K562 (cell line): ENCODE measurements at regions of chr4 and their contacts with region 1.

Region 1: GRCh38 chr4:140497747-140498636 is at the start of gene MGAT4D:
- DNase-seq: no peak
- ATAC-seq: peak; percentile 49; the same call in 2 of the 3 replicates
- H3K4me3 ChIP-seq: no peak within 1 kb of the TSS
- H3K27ac ChIP-seq: no peak within 1 kb of the TSS
- H3K4me1 ChIP-seq: peaks cover 0 to 8% of the 10 kb centered on the region in 2 experiments; a peak in 1 of 5 replicates
- H3K27me3 ChIP-seq: peaks cover 20 to 32% of the 10 kb centered on the region in 2 experiments; a peak in 4 of 5 replicates
- CTCF ChIP-seq: no peak
- EP300 ChIP-seq: no peak
- POLR2A ChIP-seq: no peak
- RAD21 ChIP-seq: no peak
- polyA plus RNA-seq, gene MGAT4D: not detected

Region 2: DNA sequence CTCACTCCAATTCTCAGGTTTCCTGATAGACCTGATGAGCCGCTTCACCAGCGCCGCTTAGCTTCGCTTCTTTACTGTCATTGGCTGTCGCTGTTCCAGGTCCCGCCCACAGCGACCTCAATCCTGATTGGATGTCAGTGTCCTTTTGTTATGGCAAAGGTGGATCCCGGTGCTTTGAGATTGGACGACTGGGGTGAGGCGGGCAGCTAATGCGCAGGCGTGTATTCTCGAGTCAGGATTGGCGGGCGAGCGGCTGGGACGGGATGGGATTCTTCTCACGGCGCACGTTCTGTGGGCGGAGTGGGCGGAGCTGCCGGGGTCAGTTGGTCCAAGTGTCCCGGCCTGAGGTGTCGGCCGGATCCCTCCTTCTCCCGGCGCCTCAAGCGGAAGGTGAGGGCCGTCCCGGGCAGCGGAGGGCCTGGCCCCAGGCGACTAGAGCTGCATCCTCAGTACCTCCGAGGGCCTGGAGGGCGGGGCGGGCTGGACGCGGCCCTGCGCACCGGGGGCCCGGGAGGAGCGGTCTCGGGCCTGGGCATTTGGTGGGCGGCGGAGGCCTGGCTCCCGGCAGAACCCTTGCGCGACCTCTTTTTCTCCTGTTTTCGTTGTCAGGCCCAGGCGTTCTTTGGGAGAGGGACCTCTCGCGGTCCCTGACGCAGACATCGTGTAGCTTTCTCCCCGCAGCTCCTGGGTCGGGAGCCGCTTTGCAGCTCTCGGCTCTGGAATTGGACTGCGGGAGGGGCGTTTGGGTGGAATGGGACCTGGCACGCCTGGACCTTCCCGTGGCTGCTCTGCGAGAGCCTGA is 124.5 kb before region 1 on chr4 and contains the start of gene SCOC:
- CTCF ChIA-PET with region 1: no interaction called
- POLR2A ChIA-PET with region 1: no interaction called
- in situ Hi-C with region 1: no loop called
- intact Hi-C with region 1: loop called (anchors 5 kb)
- DNase-seq: peak; percentile 98 to 99 (median 99)
- ATAC-seq: peak; percentile 97
- H3K4me3 ChIP-seq: peak within 1 kb of the TSS; percentile 89
- H3K27ac ChIP-seq: peak within 1 kb of the TSS; percentile 67
- H3K4me1 ChIP-seq: peaks cover 6 to 7% of the 10 kb centered on the region in 2 experiments; a peak in 3 of 5 replicates
- H3K27me3 ChIP-seq: no peaks in the 10 kb centered on the region
- CTCF ChIP-seq: no peak
- EP300 ChIP-seq: no peak
- POLR2A ChIP-seq: peak; percentile 87
- RAD21 ChIP-seq: no peak
- polyA plus RNA-seq, gene SCOC: 93.6 to 110 TPM